ENCODE measurements at regions of chr5 and their contacts with region 1.

Region 1: DNA sequence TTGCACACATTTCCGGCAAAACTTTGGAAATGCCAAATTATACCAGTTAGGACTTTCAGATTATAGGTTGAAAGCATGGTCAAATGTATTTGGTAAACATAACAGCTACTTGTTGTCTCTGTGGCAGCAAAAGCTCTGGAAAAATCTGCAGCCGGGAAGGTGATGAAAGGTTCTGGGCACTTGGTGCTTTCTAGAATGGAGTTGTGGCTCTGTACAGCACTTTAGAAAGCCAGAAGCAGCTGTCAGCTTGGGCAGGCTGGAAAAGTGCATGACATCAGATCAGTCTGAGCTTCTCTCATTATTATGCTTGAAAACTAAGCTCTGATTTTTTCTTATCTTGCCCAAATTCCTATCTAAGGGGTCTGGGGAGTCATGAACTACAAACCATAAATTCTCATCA is 118.6 kb upstream of the MAST4 start:
- DNase-seq: no peak
- H3K4me3 ChIP-seq: no peak overlapping the region
- H3K27ac ChIP-seq: no peak overlapping the region
- H3K4me1 ChIP-seq: no peaks in the 10 kb centered on the region
- H3K27me3 ChIP-seq: no peaks in the 10 kb centered on the region; the same call in 1 of the 2 replicates
- CTCF ChIP-seq: no peak

Region 2: GRCh38 chr5:66382152-66382551 is 95.4 kb before region 1 on chr5:
- CTCF ChIA-PET with region 1: no interaction called
- POLR2A ChIA-PET with region 1: interaction called, 15 read pairs
- intact Hi-C with region 1: no loop called
- DNase-seq: no peak
- H3K4me3 ChIP-seq: no peak overlapping the region
- H3K27ac ChIP-seq: no peak overlapping the region
- H3K4me1 ChIP-seq: no peaks in the 10 kb centered on the region
- H3K27me3 ChIP-seq: no peaks in the 10 kb centered on the region
- CTCF ChIP-seq: no peak

Region 3: GRCh38 chr5:66415208-66415607 is 62.4 kb before region 1 on chr5:
- CTCF ChIA-PET with region 1: no interaction called
- POLR2A ChIA-PET with region 1: no interaction called
- intact Hi-C with region 1: no loop called
- DNase-seq: no peak
- H3K4me3 ChIP-seq: no peak overlapping the region
- H3K27ac ChIP-seq: no peak overlapping the region
- H3K4me1 ChIP-seq: no peaks in the 10 kb centered on the region
- H3K27me3 ChIP-seq: no peaks in the 10 kb centered on the region
- CTCF ChIP-seq: no peak

Measured in PC-9 (cell line).